Astrocyte of the cerebellum (primary cell): ENCODE measurements at regions of chr3 and their contacts with region 1.

Region 1: GRCh38 chr3:111577794-111578685 is 17.1 kb downstream of the ZBED2 start:
- DNase-seq: peak; percentile 80
- H3K4me3 ChIP-seq: no peak overlapping the region
- CTCF ChIP-seq: peak; percentile 70

Region 2: DNA sequence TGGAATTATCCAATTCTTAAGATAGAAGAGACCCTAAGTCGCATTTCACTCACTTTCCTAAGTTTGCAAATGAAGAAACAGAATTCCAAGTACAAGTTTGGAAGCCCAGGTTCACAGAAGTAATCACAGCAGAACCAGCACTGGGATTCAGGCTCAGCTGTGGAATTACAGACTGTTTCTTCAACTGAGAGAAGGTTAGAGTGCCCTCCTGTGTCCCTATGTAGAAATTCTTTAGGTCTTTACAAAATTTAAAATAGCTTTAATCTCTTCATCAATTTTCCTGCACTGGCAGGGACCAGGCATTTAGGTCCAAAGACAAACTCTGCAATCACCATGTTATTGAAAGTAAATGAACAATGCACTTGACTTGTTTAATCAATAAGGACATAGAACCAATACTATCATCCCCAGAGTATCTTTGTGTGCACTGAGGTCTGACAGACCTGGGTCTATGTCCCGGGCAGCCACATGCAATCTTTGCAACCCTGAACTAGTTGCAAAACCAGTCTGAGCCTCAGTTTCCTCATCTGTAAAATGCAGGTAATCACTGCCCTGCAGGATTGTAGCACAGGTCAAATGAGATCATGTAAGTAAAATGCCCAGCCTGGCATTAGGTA is 113.4 kb after region 1 on chr3:
- in situ Hi-C with region 1: loop called (anchors 5 kb)
- DNase-seq: no peak
- H3K4me3 ChIP-seq: no peak overlapping the region
- CTCF ChIP-seq: peak; percentile 56